ENCODE measurements at regions of chr7 and their contacts with region 1.

Region 1: DNA sequence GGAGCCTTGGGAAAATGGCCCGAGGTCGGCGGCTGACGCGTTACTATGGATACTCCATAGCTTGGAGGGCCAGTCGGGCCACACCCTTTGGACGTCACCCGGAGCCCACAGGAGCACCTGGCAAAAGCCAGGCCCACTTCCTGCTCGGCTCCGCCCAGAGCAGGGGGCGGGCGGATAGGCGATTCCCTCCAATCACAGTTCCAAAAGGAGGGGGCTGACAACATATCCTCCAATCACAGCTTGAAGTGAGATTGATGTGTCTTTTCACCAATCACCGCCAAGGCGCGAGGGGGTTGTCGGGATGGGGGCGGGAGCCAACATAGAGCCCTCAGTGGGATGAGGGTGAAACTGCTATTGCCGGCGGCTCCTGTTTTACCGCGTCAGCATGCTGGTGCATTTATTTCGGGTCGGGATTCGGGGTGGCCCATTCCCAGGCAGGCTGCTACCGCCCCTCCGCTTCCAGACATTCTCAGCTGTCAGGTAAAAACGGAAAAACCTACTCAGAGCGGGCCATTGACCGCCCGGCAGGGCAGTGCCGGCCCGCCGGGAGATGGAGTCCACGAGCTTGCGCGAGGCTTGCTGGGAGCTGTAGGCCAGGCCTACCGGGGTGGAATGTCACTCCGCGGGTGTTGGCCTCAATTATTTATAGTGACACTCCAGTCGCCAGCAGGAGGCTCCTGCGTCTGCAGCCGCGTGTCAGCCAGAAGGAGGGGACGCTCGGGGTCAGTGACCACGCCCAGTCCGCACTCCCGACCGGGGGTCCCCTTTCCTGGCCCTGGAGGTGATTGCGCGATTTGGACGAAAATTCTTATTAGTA is at the start of gene ABCB8:
- DNase-seq: peak; percentile 98
- ATAC-seq: peak; percentile 96
- H3K4me3 ChIP-seq: peak within 1 kb of the TSS; percentile 81
- H3K27ac ChIP-seq: peak within 1 kb of the TSS; percentile 47
- H3K4me1 ChIP-seq: peaks cover 4% of the 10 kb centered on the region
- H3K27me3 ChIP-seq: no peaks in the 10 kb centered on the region; a peak in 1 of 4 replicates
- CTCF ChIP-seq: peak; percentile 22 to 57 (median 53); a peak in 4 of 6 replicates
- EP300 ChIP-seq: no peak
- POLR2A ChIP-seq: peak; percentile 60; the same call in 1 of the 2 replicates
- RAD21 ChIP-seq: 0 out of 2 replicates have a peak, but pooled peaks have one; percentile 34
- polyA plus RNA-seq, gene ABCB8: 0.77 to 1.2 TPM

Region 2: DNA sequence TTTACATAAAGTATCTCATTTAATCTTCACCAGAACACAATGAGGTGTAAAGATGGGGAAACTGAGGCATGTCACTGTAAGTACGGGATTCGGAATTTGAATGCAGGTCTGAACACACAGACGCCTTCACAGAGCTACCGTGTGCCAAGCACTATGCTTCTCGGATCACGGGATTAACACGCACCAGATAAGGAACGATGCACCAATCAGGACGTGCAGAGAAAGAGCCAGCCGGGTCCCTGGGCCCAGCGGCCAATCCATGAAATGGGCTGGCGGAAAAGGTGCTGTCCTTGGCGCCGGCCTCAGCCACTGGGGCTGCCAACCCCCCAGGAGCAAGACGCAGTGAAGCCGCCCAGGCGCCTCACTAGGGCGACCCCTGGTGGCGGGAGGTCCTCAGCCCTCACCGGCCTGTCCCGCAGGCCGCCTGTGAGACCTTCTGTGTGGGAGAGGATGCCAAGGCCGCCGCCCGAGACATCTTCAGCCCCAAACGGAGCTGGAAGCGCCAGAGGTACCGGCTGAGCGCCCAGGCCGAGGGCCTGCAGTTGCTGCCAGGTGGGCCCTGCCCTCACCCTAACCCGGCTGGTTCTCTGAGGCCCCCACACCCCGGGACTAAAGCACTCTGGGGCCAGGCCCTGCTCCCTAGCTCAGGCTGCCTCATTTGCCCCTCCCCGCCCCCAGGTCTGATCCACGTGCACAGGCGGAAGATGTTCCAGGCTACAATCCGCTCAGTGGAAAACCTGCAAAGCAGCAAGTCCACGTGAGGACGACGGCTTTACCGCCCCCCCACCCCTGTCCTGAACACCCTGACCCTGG is 19.6 kb before region 1 on chr7:
- CTCF ChIA-PET with region 1: interaction called, 35 read pairs
- POLR2A ChIA-PET with region 1: no interaction called
- RAD21 ChIA-PET with region 1: interaction called, 3 read pairs
- SMC1A ChIA-PET with region 1: interaction called, 5 read pairs
- in situ Hi-C with region 1: no loop called
- intact Hi-C with region 1: no loop called
- DNase-seq: peak; percentile 39
- ATAC-seq: peak; percentile 98
- H3K4me3 ChIP-seq: no peak overlapping the region
- H3K27ac ChIP-seq: no peak overlapping the region
- H3K4me1 ChIP-seq: peaks cover 2% of the 10 kb centered on the region; the same call in 1 of the 2 replicates
- H3K27me3 ChIP-seq: no peaks in the 10 kb centered on the region; a peak in 1 of 4 replicates
- CTCF ChIP-seq: peak; percentile 77 to 99 (median 89)
- EP300 ChIP-seq: 0 out of 4 replicates have a peak, but pooled peaks of 1 of the 2 experiments have one; percentile 19
- POLR2A ChIP-seq: no peak
- RAD21 ChIP-seq: peak; percentile 24; the same call in 1 of the 2 replicates

Region 3: GRCh38 chr7:151017953-151018420 is 10.4 kb before region 1 on chr7:
- CTCF ChIA-PET with region 1: interaction called, 14 read pairs
- POLR2A ChIA-PET with region 1: no interaction called
- RAD21 ChIA-PET with region 1: no interaction called
- SMC1A ChIA-PET with region 1: interaction called, 3 read pairs
- in situ Hi-C with region 1: no loop called
- intact Hi-C with region 1: no loop called
- DNase-seq: no peak
- ATAC-seq: peak; percentile 84
- H3K4me3 ChIP-seq: no peak overlapping the region
- H3K27ac ChIP-seq: no peak overlapping the region
- H3K4me1 ChIP-seq: peaks cover 9% of the 10 kb centered on the region
- H3K27me3 ChIP-seq: peaks cover 8 to 10% of the 10 kb centered on the region in 2 experiments; a peak in 3 of 4 replicates
- CTCF ChIP-seq: peak; percentile 83 to 97 (median 88)
- EP300 ChIP-seq: no peak
- POLR2A ChIP-seq: no peak
- RAD21 ChIP-seq: peak; percentile 49

Region 4: GRCh38 chr7:151057989-151058780 is 29.8 kb after region 1 on chr7:
- CTCF ChIA-PET with region 1: interaction called, 3 read pairs
- POLR2A ChIA-PET with region 1: interaction called, 3 read pairs
- RAD21 ChIA-PET with region 1: no interaction called
- SMC1A ChIA-PET with region 1: no interaction called
- in situ Hi-C with region 1: no loop called
- intact Hi-C with region 1: loop called (anchors 1 kb)
- DNase-seq: peak; percentile 95
- ATAC-seq: peak; percentile 93
- H3K4me3 ChIP-seq: peak overlapping the region; percentile 99
- H3K27ac ChIP-seq: peak overlapping the region; percentile 88
- H3K4me1 ChIP-seq: peaks cover 24% of the 10 kb centered on the region
- H3K27me3 ChIP-seq: no peaks in the 10 kb centered on the region
- CTCF ChIP-seq: no peak
- EP300 ChIP-seq: peak in 1 of 2 experiments; percentile 8; a peak in 1 of 4 replicates
- POLR2A ChIP-seq: peak; percentile 73
- RAD21 ChIP-seq: no peak

Region 5: DNA sequence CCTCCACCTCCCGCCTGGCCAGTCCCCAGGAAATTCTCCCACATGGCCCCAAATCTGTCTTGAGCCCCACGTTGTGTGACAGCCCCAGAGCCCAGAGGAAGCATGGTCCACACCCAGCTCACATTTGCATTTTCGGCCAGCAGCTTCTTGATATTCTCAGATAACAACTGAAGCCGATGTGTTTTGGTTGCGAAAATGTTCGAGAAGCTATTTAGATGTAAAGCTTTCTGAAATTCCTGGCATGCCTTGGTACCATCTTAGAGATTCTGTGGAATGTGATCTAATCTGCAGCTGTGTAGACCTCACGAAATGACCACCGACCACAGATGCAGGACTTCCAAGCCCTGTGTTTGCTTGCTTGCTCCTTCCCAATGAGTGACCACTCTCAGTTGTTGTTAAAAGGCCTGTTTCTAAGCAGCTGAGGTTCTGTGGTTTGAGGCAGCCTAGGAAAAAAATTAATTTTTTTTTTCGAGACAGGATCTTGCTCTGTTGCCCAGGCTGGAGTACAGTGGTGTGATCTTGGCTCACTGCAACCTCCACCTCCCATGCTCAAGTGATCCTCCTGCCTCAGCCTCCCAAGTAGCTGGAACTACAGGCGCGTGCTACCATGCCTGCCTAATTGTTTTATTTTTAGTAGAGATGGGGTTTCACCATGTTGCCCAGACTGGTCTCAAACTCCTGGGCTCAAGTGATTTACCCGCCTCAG is 39.9 kb after region 1 on chr7:
- CTCF ChIA-PET with region 1: no interaction called
- POLR2A ChIA-PET with region 1: no interaction called
- RAD21 ChIA-PET with region 1: no interaction called
- SMC1A ChIA-PET with region 1: no interaction called
- in situ Hi-C with region 1: no loop called
- intact Hi-C with region 1: no loop called
- DNase-seq: no peak
- ATAC-seq: no peak
- H3K4me3 ChIP-seq: no peak overlapping the region
- H3K27ac ChIP-seq: no peak overlapping the region
- H3K4me1 ChIP-seq: no peaks in the 10 kb centered on the region
- H3K27me3 ChIP-seq: no peaks in the 10 kb centered on the region
- CTCF ChIP-seq: no peak
- EP300 ChIP-seq: no peak
- POLR2A ChIP-seq: no peak
- RAD21 ChIP-seq: no peak

Region 6: GRCh38 chr7:151080522-151081169 is 52.3 kb after region 1 on chr7 and contains the start of gene FASTK:
- CTCF ChIA-PET with region 1: interaction called, 5 read pairs
- POLR2A ChIA-PET with region 1: interaction called, 14 read pairs
- RAD21 ChIA-PET with region 1: interaction called, 10 read pairs
- SMC1A ChIA-PET with region 1: interaction called, 16 read pairs
- in situ Hi-C with region 1: no loop called
- intact Hi-C with region 1: loop called (anchors 2 kb)
- DNase-seq: no peak
- ATAC-seq: peak; percentile 89
- H3K4me3 ChIP-seq: peak within 1 kb of the TSS; percentile 83
- H3K27ac ChIP-seq: peak within 1 kb of the TSS; percentile 90
- H3K4me1 ChIP-seq: peaks cover 31% of the 10 kb centered on the region
- H3K27me3 ChIP-seq: no peaks in the 10 kb centered on the region
- CTCF ChIP-seq: no peak
- EP300 ChIP-seq: no peak
- POLR2A ChIP-seq: peak; percentile 91
- RAD21 ChIP-seq: no peak
- polyA plus RNA-seq, gene FASTK: 0.19 to 4.1 TPM

Region 7: GRCh38 chr7:151085691-151086620 is 57.6 kb after region 1 on chr7 and contains the start of gene AGAP3:
- CTCF ChIA-PET with region 1: interaction called, 6 read pairs
- POLR2A ChIA-PET with region 1: interaction called, 14 read pairs
- RAD21 ChIA-PET with region 1: interaction called, 10 read pairs
- SMC1A ChIA-PET with region 1: interaction called, 16 read pairs
- in situ Hi-C with region 1: no loop called
- intact Hi-C with region 1: loop called (anchors 2 kb)
- DNase-seq: no peak
- ATAC-seq: peak; percentile 55
- H3K4me3 ChIP-seq: peak within 1 kb of the TSS; percentile 87
- H3K27ac ChIP-seq: peak within 1 kb of the TSS; percentile 80
- H3K4me1 ChIP-seq: peaks cover 36% of the 10 kb centered on the region
- H3K27me3 ChIP-seq: no peaks in the 10 kb centered on the region
- CTCF ChIP-seq: no peak
- EP300 ChIP-seq: no peak
- POLR2A ChIP-seq: peak; percentile 85
- RAD21 ChIP-seq: no peak
- polyA plus RNA-seq, gene AGAP3: 1.8 to 4.7 TPM